ENCODE measurements at regions of chr18 and their contacts with region 1.

Region 1: DNA sequence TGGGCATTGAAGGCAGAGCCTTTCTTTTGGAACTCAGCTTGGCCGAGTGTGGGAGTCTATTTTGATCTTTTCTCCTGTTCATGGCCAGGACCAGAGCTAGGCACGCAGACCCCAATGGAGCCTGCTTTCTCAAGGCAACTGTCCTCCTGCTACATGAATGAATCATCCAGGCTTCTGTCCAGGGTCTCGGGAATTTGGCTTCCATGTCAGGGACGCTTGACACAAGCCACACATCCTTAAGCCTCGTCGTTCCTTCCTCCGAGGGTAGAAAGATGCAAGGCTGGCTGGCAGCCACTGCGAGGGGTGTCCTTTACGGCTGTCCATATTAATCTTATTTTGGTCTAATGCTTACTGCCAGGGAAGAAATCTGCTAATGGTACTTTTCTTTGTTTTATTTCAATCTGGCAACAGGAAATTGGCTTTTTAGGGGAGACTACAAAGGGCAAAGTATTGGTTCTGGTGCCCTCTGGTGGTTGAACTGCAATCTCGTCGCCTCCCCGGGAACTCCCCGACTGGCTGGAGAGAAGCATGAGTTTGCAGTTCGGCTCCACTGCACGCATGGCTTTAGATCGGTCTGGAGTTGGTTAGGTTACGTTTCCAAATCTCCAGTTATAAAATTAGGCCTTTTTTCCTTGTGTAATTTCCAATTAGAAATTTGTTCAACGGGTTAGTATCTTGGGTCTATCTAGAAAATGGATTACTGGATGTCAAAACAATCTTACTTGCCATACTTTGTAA is 135.2 kb downstream of the ALPK2 start:
- DNase-seq: peak; percentile 90
- H3K4me3 Mint-ChIP-seq: peak overlapping the region; percentile 17
- H3K27ac Mint-ChIP-seq: no peak overlapping the region
- H3K4me1 Mint-ChIP-seq: peaks cover 11% of the 10 kb centered on the region
- H3K27me3 Mint-ChIP-seq: peaks cover 22% of the 10 kb centered on the region

Region 2: DNA sequence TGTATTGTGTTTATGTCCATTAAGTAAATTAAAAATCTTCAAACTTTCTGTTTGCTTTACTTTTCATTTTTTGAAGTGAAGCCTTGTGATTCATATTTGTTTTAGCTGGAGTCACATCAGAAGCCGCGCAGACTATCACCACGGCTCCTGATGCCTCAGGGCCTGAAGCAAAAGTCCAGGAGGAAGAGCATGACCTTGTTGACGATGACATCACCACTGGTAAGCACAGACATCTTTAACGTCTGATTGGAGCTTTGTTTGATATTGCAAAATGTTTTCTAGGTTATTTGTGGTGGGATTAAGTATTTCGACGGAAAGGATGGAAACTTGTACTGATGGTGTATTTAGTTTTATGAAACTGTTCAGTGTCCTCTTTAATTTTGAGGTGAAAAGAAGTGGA is 1677.8 kb before region 1 on chr18:
- CTCF ChIA-PET with region 1: no interaction called
- intact Hi-C with region 1: no loop called
- DNase-seq: no peak
- H3K4me3 Mint-ChIP-seq: no peak overlapping the region
- H3K27ac Mint-ChIP-seq: no peak overlapping the region
- H3K4me1 Mint-ChIP-seq: no peaks in the 10 kb centered on the region
- H3K27me3 Mint-ChIP-seq: no peaks in the 10 kb centered on the region

Region 3: DNA sequence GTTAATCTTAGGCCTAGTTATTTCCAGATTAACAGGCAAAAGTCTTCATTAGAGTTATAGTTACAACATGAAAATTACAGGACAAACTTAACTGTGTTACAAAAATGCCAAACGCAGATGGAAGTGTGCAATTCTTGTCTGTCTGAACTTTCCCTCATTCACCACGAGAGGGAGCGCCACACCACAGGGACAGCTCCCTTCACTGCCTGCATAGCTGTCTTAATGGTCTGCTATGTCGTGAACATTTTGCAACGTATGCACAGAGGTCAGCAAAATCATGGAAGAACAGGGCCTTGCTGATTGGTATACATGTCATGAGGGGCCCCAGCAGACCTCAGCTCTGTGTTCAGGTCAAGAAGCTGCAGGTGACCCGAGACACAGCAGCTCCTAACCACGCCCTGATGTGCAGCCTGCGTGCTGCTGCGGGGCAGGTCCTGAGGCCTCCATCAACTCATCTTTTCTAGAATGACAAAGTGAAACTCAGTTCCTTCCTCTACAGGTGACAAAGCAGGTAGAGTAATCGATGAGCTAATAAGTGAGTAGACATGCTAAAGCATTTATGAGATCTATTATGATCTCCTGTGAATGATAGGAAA is 611.8 kb before region 1 on chr18:
- CTCF ChIA-PET with region 1: no interaction called
- intact Hi-C with region 1: loop called (anchors 2 kb)
- DNase-seq: peak; percentile 75
- H3K4me3 Mint-ChIP-seq: no peak overlapping the region
- H3K27ac Mint-ChIP-seq: no peak overlapping the region
- H3K4me1 Mint-ChIP-seq: no peaks in the 10 kb centered on the region
- H3K27me3 Mint-ChIP-seq: peaks cover 20% of the 10 kb centered on the region

Region 4: DNA sequence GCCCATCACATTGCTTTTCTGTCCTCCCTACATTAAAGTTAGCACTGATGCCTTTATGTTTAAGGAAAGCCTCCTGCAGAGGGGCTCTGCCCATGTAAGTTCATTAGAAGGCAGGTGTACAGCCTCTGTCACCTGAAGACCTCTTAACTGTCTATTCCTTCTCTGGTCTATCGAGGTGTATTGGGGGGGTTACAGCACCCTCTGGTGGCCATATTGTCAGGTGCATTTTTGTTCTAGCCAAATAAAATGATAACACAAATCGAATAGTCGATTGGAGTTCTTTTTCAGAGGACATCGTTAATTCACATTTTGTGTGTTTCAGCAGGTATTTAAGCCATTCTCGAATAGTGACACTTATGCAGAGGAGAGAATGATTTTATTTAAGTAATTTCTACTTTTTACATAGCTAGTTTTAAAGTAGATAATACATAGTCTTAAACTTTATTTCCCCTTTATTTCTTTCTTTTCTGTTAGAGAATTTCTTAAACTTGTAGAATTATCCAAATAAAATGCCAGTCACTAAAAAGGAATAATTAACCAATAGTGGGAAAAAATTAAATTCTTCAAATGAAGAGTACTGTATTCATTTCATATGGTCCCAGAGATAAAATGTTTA is 312.8 kb before region 1 on chr18:
- CTCF ChIA-PET with region 1: no interaction called
- intact Hi-C with region 1: loop called (anchors 5 kb)
- DNase-seq: peak; percentile 83
- H3K4me3 Mint-ChIP-seq: no peak overlapping the region
- H3K27ac Mint-ChIP-seq: no peak overlapping the region
- H3K4me1 Mint-ChIP-seq: no peaks in the 10 kb centered on the region
- H3K27me3 Mint-ChIP-seq: no peaks in the 10 kb centered on the region

Region 5: GRCh38 chr18:58303363-58303762 is 190.3 kb before region 1 on chr18:
- CTCF ChIA-PET with region 1: no interaction called
- intact Hi-C with region 1: loop called (anchors 2 kb)
- DNase-seq: peak; percentile 75
- H3K4me3 Mint-ChIP-seq: no peak overlapping the region
- H3K27ac Mint-ChIP-seq: peak overlapping the region; percentile 40
- H3K4me1 Mint-ChIP-seq: peaks cover 38% of the 10 kb centered on the region
- H3K27me3 Mint-ChIP-seq: peaks cover 2% of the 10 kb centered on the region

Region 6: GRCh38 chr18:58402247-58402646 is 91.4 kb before region 1 on chr18:
- CTCF ChIA-PET with region 1: interaction called, 6 read pairs
- intact Hi-C with region 1: loop called (anchors 1 kb)
- DNase-seq: no peak
- H3K4me3 Mint-ChIP-seq: no peak overlapping the region
- H3K27ac Mint-ChIP-seq: no peak overlapping the region
- H3K4me1 Mint-ChIP-seq: peaks cover 25% of the 10 kb centered on the region
- H3K27me3 Mint-ChIP-seq: no peaks in the 10 kb centered on the region

Region 7: GRCh38 chr18:59345556-59345955 is 851.9 kb after region 1 on chr18:
- CTCF ChIA-PET with region 1: no interaction called
- intact Hi-C with region 1: no loop called
- DNase-seq: no peak
- H3K4me3 Mint-ChIP-seq: no peak overlapping the region
- H3K27ac Mint-ChIP-seq: no peak overlapping the region
- H3K4me1 Mint-ChIP-seq: peaks cover 43% of the 10 kb centered on the region
- H3K27me3 Mint-ChIP-seq: no peaks in the 10 kb centered on the region